Activated CD8-positive, alpha-beta memory T cell treated with anti-CD3 and anti-CD28 coated beads, Interleukin-2, amount 10 ng/mL, durations not matched to agents 7 days and 5 days (primary cell): ENCODE measurements at regions of chrX and their contacts with region 1.

Region 1: DNA sequence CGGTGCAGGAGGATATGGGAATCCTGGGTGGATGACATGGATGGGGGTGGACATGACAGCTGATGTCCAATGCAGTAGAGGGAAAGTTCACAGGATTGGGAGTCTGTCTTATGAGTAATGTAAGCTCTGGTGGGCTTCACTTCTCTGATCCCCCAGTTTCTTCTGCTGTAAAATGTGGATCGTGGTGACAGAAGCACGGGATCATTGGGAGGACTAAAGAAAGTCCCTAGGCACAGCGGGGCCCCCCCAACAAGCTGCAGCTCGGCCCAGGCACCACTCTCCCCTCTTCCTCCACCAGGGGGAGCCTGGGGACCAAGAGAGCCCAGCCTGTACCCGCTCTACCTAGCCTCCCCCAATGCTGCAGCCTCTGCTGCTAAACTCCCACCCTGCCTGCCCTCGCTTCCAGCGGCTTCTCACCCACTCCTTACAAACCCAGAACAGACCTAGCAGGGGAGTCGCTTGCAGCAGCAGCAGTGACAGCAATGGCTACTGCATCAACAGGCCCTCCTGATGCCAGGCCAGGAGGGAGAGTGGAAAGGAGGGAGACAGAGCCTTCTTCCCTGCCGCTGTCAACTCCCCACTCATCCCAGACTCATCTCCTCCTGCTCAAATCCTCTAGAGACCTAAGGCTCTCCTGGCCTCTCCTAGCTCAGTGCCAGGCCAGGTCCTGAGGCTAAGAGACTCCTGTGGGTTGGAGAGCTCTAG is 36.1 kb upstream of the IQSEC2 start:
- DNase-seq: peak; percentile 72
- ATAC-seq: peak; percentile 88
- H3K4me3 Mint-ChIP-seq: no peak overlapping the region
- H3K27ac Mint-ChIP-seq: no peak overlapping the region
- H3K4me1 Mint-ChIP-seq: peaks cover 9% of the 10 kb centered on the region
- H3K27me3 Mint-ChIP-seq: peaks cover 34% of the 10 kb centered on the region

Region 2: GRCh38 chrX:53211391-53211978 is 106.0 kb before region 1 on chrX:
- CTCF ChIA-PET with region 1: no interaction called
- DNase-seq: no peak
- ATAC-seq: no peak
- H3K4me3 Mint-ChIP-seq: no peak overlapping the region
- H3K27ac Mint-ChIP-seq: no peak overlapping the region
- H3K4me1 Mint-ChIP-seq: no peaks in the 10 kb centered on the region
- H3K27me3 Mint-ChIP-seq: no peaks in the 10 kb centered on the region

Region 3: GRCh38 chrX:53284684-53285447 is 32.7 kb before region 1 on chrX:
- CTCF ChIA-PET with region 1: interaction called, 13 read pairs
- DNase-seq: peak; percentile 59
- ATAC-seq: peak; percentile 46
- H3K4me3 Mint-ChIP-seq: no peak overlapping the region
- H3K27ac Mint-ChIP-seq: no peak overlapping the region
- H3K4me1 Mint-ChIP-seq: peaks cover 34% of the 10 kb centered on the region
- H3K27me3 Mint-ChIP-seq: no peaks in the 10 kb centered on the region

Region 4: DNA sequence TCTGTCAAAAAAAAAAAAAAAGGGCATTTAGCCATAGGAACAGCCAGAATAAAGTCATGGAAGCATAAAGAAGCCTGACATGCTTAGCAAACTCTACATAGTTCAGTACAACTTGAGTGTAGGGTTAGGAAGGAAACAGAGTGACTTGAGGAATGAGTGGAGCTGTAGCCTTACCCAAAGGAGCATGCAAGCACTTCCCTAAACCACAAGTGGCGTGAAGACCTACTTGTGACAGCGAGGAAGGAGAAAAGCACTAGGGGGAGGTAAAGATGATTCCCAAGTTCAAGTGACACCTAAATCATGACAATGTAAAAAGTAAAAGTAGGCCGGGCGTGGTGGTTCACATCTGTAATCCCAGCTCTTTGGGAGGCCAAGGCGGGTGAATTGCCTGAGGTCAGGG is 14.3 kb before region 1 on chrX:
- CTCF ChIA-PET with region 1: interaction called, 14 read pairs
- DNase-seq: no peak
- ATAC-seq: no peak
- H3K4me3 Mint-ChIP-seq: no peak overlapping the region
- H3K27ac Mint-ChIP-seq: no peak overlapping the region
- H3K4me1 Mint-ChIP-seq: no peaks in the 10 kb centered on the region
- H3K27me3 Mint-ChIP-seq: no peaks in the 10 kb centered on the region

Region 5: DNA sequence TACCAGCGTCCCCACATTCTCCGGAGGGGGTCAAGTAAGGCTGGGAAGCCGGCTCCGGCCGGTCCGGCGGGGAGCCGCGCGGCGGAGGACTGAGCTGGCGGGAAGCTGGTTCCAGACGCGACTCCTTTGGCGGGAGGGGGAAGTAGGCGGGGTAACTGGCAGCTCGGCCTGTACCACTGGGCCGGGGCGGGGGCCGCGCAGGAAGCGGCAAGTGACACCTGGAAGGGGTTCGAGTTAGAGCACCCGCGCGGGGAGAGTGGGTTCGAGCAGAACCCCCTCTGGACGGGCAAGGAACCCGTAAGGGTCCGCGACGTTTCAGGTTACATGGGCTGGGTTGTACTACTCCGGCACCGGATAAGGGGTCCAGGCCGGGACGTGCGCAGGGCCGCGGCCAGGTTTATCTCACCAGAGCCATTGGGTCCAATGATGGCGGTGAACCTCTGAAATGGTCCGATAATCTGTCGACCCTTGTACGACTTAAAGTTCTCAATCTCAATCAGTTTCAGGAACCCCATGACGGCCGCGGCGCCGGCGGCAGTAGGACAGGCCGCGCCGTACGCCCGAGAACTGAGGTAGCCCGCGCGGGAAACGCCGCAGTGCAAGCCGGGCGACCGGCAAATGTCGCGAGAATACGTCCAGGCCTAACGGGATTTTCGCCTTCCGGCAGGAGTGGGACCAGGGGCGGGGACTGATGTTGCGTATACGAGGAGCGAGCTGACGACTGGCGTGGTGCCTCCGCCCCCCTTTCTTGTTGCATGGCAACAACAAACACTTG is 104.8 kb after region 1 on chrX and contains the start of gene SMC1A:
- CTCF ChIA-PET with region 1: interaction called, 10 read pairs
- DNase-seq: peak; percentile 97
- ATAC-seq: peak; percentile 89
- H3K4me3 Mint-ChIP-seq: peak within 1 kb of the TSS; percentile 92
- H3K27ac Mint-ChIP-seq: peak within 1 kb of the TSS; percentile 93
- H3K4me1 Mint-ChIP-seq: peaks cover 28% of the 10 kb centered on the region
- H3K27me3 Mint-ChIP-seq: no peaks in the 10 kb centered on the region
- total RNA-seq, gene SMC1A: 159 to 171 TPM

Region 6: DNA sequence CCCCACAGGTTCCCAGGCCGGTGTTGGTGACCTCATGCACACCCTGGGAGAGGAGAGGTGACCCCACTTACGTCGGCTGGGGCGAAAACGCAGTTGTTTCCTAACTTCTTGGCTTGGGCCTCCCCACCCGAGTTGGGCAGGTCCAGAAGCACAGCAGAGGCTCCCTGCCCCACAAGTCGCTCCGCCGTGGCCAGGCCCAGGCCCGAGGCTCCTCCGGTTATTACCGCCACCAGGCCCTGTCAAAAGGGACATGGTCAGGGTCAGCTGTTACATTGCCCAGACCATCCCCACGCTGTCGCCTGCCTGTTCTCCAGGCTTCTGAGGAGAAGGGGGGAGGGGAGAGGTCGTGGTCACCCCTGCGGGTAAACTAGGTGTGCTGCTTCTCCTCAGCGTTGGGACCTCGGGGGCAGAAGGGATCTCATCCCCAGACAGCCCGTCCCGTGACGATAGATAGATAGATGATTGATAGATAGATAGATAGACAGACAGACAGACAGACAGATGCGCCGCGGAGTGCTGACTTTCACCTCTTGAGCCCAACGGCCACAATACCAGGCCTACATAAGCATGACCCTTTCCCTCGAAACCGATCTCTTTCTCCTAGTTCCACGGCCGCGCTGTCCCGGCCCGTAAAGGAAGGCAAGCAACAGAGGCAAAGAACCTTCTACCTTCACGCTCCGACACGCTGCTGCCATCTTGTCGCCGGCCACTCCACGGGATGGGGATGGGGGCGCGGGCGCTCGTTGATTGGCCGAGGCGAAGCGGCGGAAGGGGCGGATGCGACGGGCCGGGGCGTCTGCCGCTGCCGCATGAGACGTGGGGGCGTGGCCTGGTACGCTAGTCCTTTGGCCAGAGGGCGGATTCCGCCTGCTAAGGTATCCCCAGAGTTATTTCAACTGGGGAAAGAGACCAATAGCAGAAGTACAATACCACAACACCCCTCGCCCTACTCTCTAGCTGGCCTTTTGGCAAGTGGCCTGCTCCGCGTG is 116.4 kb after region 1 on chrX and contains the start of gene HSD17B10:
- CTCF ChIA-PET with region 1: interaction called, 20 read pairs
- DNase-seq: peak; percentile 92
- ATAC-seq: peak; percentile 96
- H3K4me3 Mint-ChIP-seq: peak within 1 kb of the TSS; percentile 98
- H3K27ac Mint-ChIP-seq: peak within 1 kb of the TSS; percentile 90
- H3K4me1 Mint-ChIP-seq: peaks cover 43% of the 10 kb centered on the region
- H3K27me3 Mint-ChIP-seq: no peaks in the 10 kb centered on the region
- total RNA-seq, gene HSD17B10: 111 to 147 TPM

Region 7: GRCh38 chrX:53445977-53446376 is 128.5 kb after region 1 on chrX:
- CTCF ChIA-PET with region 1: interaction called, 46 read pairs
- DNase-seq: peak; percentile 68
- ATAC-seq: peak; percentile 49
- H3K4me3 Mint-ChIP-seq: no peak overlapping the region
- H3K27ac Mint-ChIP-seq: no peak overlapping the region
- H3K4me1 Mint-ChIP-seq: peaks cover 4% of the 10 kb centered on the region
- H3K27me3 Mint-ChIP-seq: no peaks in the 10 kb centered on the region

Region 8: DNA sequence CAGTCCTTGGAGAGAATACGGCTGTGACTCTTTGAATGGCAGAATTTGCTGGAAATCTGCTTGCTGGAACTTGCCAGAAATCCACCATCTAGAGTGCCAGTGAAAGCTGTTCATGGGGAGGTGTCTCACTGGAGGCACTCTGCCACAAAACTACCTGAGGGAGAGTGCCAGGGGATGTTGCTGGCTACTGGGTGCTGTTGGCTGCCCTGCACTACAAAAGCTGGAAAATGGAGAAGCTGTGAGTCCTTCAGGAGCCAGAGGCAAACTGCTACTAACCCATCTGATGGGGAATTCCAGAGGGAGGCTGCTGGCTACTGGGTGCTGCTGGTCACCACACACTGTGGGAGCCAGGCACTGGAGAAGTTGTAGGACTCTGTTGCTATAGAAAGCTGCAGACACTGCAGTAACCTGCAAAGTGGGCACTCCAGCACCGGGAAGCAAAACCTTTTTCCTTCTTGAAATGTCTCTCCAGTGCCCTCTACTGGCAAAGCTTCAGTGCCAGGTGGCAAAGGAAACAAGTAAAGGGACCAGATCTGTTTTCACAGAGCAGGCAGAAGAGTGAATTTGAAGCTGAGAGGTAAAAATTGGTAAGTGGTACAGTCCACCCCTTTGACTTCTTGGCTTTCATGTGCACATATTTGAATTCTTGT is 164.4 kb after region 1 on chrX:
- CTCF ChIA-PET with region 1: interaction called, 40 read pairs
- DNase-seq: peak; percentile 64
- ATAC-seq: peak; percentile 47
- H3K4me3 Mint-ChIP-seq: no peak overlapping the region
- H3K27ac Mint-ChIP-seq: no peak overlapping the region
- H3K4me1 Mint-ChIP-seq: no peaks in the 10 kb centered on the region
- H3K27me3 Mint-ChIP-seq: peaks cover 5% of the 10 kb centered on the region